ENCODE measurements at regions of chr7 and their contacts with region 1.

Region 1: DNA sequence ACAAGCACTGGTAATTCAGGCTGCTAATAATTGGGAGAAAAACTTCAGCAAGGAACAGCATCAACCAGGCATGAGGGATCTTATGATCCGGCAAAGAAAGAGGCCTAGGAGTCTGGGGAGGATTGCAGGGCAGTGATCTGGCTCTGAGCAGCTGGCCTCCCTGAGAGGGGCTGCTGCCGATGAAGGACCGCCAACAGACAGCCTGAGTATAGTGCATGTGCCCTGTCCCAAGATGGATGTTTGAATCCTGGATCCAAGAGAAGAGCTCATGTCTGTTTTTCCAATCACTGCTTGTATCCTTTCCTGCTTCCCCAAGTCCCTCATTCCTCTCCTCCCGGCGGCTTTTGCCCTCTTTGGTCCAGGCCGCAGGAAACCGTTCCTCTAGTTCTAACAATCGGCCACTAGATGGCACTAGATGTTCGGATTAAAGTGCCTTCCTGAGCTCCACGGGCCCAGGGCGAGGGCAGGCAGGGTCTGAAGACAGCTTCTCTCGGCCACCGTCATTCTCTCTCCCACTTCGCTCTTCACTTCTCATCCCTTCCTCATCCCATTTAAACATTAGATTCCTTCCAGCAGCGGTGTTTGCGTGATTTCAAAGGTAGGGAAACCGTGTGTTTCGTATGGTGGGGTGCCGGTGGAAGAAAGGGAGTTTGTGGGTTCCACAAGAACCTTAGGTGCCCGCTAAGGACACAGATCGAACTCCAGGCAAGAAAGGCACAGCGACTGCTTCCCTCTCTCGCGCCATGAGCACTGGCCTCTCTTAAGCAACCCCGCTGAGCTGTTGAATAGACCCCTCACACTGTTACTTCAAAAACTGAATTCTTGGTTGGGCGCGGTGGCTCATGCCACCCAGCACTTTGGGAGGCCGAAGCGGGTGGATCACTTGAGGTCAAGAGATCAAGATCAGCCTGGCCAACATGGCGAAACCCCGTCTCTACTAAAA is 82.4 kb downstream of the ADCYAP1R1 start:
- DNase-seq: peak; percentile 73
- H3K4me3 ChIP-seq: no peak overlapping the region
- H3K27ac ChIP-seq: no peak overlapping the region
- H3K4me1 ChIP-seq: no peaks in the 10 kb centered on the region
- CTCF ChIP-seq: peak; percentile 81

Region 2: GRCh38 chr7:31488562-31489203 is 354.2 kb after region 1 on chr7:
- CTCF ChIA-PET with region 1: no interaction called
- POLR2A ChIA-PET with region 1: no interaction called
- intact Hi-C with region 1: loop called (anchors 5 kb)
- DNase-seq: peak; percentile 58
- H3K4me3 ChIP-seq: no peak overlapping the region
- H3K27ac ChIP-seq: no peak overlapping the region
- H3K4me1 ChIP-seq: no peaks in the 10 kb centered on the region
- CTCF ChIP-seq: peak; percentile 93